ENCODE measurements at regions of chr12 and their contacts with region 1.

Region 1: GRCh38 chr12:89345830-89346740 is 6.2 kb downstream of the DUSP6 start:
- DNase-seq: peak; percentile 45
- H3K4me3 ChIP-seq: peak overlapping the region; percentile 89
- H3K27ac ChIP-seq: peak overlapping the region; percentile 99
- H3K4me1 ChIP-seq: peaks cover 72% of the 10 kb centered on the region
- H3K27me3 ChIP-seq: no peaks in the 10 kb centered on the region
- CTCF ChIP-seq: no peak

Region 2: DNA sequence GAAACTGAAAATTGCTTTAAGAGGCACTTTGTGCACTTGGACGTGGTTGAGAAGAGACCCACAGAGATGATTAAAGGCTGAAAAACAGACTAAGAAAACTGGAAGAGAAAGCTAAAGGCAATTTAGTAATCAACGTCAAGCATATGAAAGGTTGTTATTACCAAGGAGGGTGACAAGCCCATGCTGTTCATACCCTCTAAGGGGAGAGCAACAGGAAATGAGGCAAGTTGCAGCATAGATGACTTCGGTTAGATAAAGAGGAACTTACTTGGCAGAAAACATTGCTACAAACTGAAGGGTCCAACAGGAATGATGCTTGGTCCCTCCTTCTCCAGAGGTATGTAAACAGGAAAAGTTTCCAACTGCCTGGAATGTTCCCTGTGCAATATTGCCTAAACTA is 101.5 kb before region 1 on chr12:
- intact Hi-C with region 1: loop called (anchors 10 kb)
- DNase-seq: no peak
- H3K4me3 ChIP-seq: no peak overlapping the region
- H3K27ac ChIP-seq: no peak overlapping the region
- H3K4me1 ChIP-seq: peaks cover 13% of the 10 kb centered on the region
- H3K27me3 ChIP-seq: no peaks in the 10 kb centered on the region
- CTCF ChIP-seq: no peak